ENCODE measurements at regions of chr9 and their contacts with region 1.

Region 1: DNA sequence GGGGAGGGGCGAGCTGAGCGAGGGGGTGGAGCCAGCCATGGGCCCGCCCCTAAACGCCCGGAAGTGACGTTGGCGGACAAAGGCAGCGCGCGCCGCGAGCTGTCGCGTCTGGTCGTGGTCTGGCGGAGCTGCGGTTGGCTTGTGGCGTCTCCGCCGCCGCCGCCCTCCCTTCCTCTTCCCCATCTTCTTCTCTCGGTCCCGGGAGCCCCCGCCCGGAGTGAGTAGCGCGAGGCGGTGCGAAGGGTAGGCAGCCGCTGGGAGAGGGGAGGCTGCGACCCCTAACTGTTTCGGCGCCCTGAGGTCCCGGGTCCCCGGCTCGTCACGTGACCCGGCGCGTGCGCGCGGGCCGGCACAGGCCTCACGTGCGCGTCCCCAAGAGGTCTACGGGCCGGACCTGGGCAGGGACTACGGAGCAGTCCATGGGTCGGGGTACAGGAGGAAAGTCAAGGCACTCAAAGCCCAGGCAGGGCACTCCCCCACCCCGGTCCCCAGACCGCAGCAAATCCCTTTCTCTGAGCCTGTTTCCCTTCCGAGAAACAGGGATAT is at the start of gene NTMT1:
- DNase-seq: peak; percentile 90
- ATAC-seq: peak; percentile 83
- H3K4me3 Mint-ChIP-seq: peak within 1 kb of the TSS; percentile 77
- H3K27ac Mint-ChIP-seq: peak within 1 kb of the TSS; percentile 95
- H3K4me1 Mint-ChIP-seq: peaks cover 52% of the 10 kb centered on the region
- H3K27me3 Mint-ChIP-seq: peaks cover 4% of the 10 kb centered on the region
- CTCF ChIP-seq: no peak
- total RNA-seq, gene NTMT1: 69.5 to 74.4 TPM

Region 2: DNA sequence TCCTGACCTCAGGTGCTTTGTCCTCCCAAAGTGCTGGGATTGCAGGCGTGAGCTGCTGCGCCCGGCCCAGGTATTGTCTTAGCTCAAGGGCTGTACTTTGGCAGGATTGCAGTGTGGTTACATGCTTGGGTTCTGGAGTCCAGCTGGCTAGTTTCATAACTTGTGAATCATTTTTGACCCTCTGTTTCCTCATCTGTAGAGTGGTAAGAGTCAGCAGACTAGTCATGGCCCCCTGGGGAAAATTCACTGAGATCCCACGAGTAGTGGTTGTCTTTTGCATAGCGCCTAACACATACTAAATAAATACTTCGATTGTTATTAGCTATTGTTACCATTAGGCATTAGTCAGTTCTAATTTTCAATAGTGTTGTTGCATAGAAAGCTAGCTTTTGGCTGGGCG is 500.7 kb before region 1 on chr9:
- CTCF ChIA-PET with region 1: interaction called, 55 read pairs
- POLR2A ChIA-PET with region 1: interaction called, 3 read pairs
- intact Hi-C with region 1: no loop called
- DNase-seq: no peak
- ATAC-seq: no peak
- H3K4me3 Mint-ChIP-seq: no peak overlapping the region
- H3K27ac Mint-ChIP-seq: no peak overlapping the region
- H3K4me1 Mint-ChIP-seq: no peaks in the 10 kb centered on the region
- H3K27me3 Mint-ChIP-seq: no peaks in the 10 kb centered on the region
- CTCF ChIP-seq: no peak

Region 3: GRCh38 chr9:129131300-129132145 is 494.6 kb before region 1 on chr9:
- CTCF ChIA-PET with region 1: interaction called, 55 read pairs
- POLR2A ChIA-PET with region 1: interaction called, 3 read pairs
- intact Hi-C with region 1: no loop called
- DNase-seq: peak; percentile 89
- ATAC-seq: peak; percentile 100
- H3K4me3 Mint-ChIP-seq: no peak overlapping the region
- H3K27ac Mint-ChIP-seq: no peak overlapping the region
- H3K4me1 Mint-ChIP-seq: peaks cover 7% of the 10 kb centered on the region
- H3K27me3 Mint-ChIP-seq: no peaks in the 10 kb centered on the region
- CTCF ChIP-seq: peak; percentile 98

Region 4: DNA sequence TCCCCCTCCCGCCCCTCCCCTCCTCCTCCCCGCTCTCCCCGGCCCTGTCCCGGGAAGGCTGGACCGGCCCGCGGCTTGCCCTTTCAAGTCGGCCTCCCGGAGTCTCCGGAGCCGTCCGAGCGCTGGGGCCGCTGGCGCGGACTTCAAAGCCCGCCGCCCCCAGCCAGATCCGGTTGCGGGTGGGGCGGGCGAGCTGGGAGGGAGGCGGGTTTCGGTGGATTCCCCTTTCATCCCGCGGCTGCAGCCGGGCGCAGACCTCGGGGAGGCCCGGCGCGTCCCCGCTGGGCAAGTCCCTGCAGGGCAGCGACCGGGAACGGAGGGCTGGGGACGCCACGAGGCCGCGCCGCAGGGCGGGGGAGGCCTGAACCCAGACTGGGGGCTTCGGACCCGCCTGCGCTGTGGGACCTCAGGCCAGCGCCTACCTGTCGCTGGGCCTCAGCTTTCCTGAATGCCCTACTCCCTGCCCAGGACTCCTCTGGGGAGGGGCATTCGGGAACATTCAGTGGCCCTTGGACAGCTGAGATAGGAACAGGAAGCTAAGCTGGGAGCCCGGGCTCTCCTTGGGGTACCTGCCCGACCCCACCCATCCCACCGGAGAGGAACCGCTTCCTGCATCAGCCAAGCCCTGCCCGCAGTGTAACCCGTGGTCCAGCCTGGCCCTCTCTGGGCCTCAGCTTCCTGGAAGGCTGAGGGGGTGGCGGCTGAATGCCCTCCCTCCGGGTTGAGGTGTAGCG is 28.6 kb before region 1 on chr9:
- CTCF ChIA-PET with region 1: interaction called, 10 read pairs
- POLR2A ChIA-PET with region 1: no interaction called
- intact Hi-C with region 1: no loop called
- DNase-seq: peak; percentile 56
- ATAC-seq: peak; percentile 57
- H3K4me3 Mint-ChIP-seq: peak overlapping the region; percentile 9
- H3K27ac Mint-ChIP-seq: peak overlapping the region; percentile 67
- H3K4me1 Mint-ChIP-seq: peaks cover 17% of the 10 kb centered on the region
- H3K27me3 Mint-ChIP-seq: peaks cover 3% of the 10 kb centered on the region
- CTCF ChIP-seq: no peak

Region 5: DNA sequence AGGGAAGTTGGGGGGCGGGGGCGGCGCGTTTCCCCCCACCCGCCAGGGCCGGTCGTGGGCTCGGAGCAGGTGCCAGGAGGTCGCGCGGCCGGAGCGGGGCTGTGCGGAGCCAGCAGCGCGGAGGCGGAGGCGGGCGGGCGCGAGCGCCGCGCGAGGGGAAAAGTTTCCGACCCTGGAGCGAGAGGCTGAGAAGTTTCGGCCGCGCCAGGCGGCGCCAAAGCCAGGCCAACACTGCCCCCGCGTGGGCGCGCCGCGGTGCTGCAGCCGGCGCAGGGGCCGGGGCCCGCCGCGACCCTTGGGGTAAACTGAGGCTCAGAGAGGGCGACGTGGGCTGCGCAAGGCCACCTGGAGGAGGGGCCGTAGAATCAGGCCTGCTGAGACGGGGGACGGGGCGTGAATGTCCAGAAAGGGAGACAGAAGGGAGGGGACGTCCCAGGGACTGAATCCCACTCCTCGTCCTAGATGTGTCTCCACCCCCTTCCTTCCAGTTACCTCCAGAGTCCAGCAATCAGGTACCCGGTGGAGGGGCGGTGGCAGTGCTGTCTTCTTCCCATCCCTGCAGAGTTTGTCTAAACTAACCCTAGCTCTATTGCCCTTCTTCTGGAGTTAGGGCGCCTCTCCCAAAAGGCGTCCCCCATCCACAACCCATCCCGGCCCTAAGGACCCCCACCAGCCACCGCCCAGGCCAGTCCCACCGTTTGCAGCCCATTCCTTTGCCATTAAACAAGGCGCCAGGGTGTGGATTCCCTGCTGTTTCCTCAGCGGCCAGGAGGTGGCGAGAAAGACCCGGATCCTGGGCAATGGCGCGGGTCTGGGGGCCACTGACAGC is 15.5 kb before region 1 on chr9:
- CTCF ChIA-PET with region 1: interaction called, 27 read pairs
- POLR2A ChIA-PET with region 1: interaction called, 6 read pairs
- intact Hi-C with region 1: no loop called
- DNase-seq: peak; percentile 78
- ATAC-seq: peak; percentile 66
- H3K4me3 Mint-ChIP-seq: peak overlapping the region; percentile 62
- H3K27ac Mint-ChIP-seq: peak overlapping the region; percentile 59
- H3K4me1 Mint-ChIP-seq: peaks cover 32% of the 10 kb centered on the region
- H3K27me3 Mint-ChIP-seq: no peaks in the 10 kb centered on the region
- CTCF ChIP-seq: peak; percentile 99

Region 6: DNA sequence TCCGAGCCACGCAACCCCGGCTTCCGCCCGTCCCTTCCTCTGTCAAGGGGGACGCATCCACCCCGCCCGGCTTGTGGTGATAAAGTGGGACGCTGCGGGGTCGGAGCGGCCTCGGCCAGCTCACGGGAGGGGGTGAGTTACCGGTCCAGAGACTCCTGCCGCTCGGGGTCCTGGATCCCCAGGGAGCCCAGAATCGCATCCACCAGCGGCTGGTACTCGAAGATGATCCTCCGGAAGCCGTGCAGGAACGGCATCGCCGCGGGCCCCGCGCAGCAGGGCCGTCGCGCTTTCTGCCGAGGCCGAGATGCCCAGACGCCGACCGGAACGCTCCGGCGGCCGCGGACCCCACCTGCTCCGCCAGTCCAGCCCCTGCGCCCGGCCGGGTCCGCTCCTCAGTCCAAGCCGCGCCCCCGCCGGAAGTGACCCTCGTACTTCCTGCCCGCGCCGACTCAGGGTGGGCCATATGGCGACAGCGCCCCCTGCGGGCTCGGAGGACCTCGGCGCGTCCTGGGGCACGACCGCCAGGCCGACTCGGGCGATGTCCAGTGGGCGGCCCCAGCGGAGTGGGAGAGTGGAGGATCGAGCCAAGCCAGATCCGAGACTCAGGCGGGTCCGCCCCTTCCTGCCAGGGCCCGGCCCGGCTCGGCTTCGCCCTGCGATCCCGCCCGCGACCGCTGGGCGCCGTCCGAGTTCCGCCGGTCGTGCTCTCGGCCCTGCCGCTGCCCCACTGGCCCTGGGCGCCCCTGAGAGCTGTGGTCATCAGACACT is 15.8 kb after region 1 on chr9 and contains the start of gene ASB6:
- CTCF ChIA-PET with region 1: interaction called, 10 read pairs
- POLR2A ChIA-PET with region 1: interaction called, 21 read pairs
- intact Hi-C with region 1: no loop called
- DNase-seq: peak; percentile 97
- ATAC-seq: peak; percentile 98
- H3K4me3 Mint-ChIP-seq: peak within 1 kb of the TSS; percentile 89
- H3K27ac Mint-ChIP-seq: peak within 1 kb of the TSS; percentile 82
- H3K4me1 Mint-ChIP-seq: peaks cover 16% of the 10 kb centered on the region
- H3K27me3 Mint-ChIP-seq: no peaks in the 10 kb centered on the region
- CTCF ChIP-seq: peak; percentile 100
- total RNA-seq, gene ASB6: 16.6 TPM

Region 7: GRCh38 chr9:129752915-129753729 is 127.0 kb after region 1 on chr9 and contains the start of gene PTGES:
- CTCF ChIA-PET with region 1: no interaction called
- POLR2A ChIA-PET with region 1: no interaction called
- intact Hi-C with region 1: no loop called
- DNase-seq: peak; percentile 75
- ATAC-seq: peak; percentile 80
- H3K4me3 Mint-ChIP-seq: peak within 1 kb of the TSS; percentile 26
- H3K27ac Mint-ChIP-seq: no peak within 1 kb of the TSS
- H3K4me1 Mint-ChIP-seq: peaks cover 19% of the 10 kb centered on the region
- H3K27me3 Mint-ChIP-seq: peaks cover 6% of the 10 kb centered on the region
- CTCF ChIP-seq: no peak
- total RNA-seq, gene PTGES: 0.20 to 0.56 TPM

Region 8: DNA sequence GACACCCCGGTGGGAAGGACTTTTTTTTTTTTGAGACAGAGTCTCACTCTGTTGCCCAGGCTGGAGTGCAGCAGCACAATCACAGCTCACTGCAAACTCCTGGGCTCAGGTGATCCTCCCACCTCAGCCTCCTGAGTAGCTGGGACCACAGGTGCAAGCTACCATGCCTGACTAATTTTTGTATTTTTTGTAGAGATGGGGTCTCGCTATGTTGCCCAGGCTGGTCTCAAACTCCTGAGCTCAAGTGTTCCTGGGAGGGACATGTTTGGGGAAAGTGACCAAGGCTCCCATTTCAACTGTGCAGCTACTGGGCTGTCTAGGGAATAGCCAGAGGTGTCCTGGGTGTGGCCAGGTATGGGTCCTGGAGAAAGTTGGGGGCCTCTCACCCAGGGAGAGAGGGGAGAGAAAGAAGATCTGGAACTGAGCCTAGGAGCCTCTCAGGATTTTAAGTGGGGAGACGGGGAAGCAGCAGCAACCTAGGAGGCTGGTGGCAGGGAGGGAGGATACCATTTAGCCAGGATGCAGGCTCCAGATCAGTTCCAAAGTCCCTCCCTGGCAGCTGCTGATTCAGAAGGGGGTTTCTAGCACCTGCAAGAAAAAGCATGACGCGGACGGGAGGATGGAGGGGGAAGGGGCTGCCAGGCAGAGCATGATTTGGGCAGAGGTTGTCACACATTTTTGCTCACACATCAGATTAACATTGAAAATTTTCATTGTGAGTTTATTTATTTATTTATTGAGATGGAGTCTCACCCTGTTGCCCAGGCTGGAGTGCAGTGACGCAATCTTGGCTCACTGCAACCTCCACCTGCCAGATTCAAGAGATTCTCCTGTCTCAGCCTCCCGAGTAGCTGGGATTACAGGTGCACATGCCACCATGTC is 170.1 kb after region 1 on chr9:
- CTCF ChIA-PET with region 1: interaction called, 10 read pairs
- POLR2A ChIA-PET with region 1: no interaction called
- intact Hi-C with region 1: no loop called
- DNase-seq: no peak
- ATAC-seq: no peak
- H3K4me3 Mint-ChIP-seq: no peak overlapping the region
- H3K27ac Mint-ChIP-seq: no peak overlapping the region
- H3K4me1 Mint-ChIP-seq: no peaks in the 10 kb centered on the region
- H3K27me3 Mint-ChIP-seq: no peaks in the 10 kb centered on the region
- CTCF ChIP-seq: no peak